Activated CD8-positive, alpha-beta T cell treated with anti-CD3 and anti-CD28 coated beads for 36 hours (primary cell): ENCODE measurements at regions of chr17 and their contacts with region 1.

Region 1: DNA sequence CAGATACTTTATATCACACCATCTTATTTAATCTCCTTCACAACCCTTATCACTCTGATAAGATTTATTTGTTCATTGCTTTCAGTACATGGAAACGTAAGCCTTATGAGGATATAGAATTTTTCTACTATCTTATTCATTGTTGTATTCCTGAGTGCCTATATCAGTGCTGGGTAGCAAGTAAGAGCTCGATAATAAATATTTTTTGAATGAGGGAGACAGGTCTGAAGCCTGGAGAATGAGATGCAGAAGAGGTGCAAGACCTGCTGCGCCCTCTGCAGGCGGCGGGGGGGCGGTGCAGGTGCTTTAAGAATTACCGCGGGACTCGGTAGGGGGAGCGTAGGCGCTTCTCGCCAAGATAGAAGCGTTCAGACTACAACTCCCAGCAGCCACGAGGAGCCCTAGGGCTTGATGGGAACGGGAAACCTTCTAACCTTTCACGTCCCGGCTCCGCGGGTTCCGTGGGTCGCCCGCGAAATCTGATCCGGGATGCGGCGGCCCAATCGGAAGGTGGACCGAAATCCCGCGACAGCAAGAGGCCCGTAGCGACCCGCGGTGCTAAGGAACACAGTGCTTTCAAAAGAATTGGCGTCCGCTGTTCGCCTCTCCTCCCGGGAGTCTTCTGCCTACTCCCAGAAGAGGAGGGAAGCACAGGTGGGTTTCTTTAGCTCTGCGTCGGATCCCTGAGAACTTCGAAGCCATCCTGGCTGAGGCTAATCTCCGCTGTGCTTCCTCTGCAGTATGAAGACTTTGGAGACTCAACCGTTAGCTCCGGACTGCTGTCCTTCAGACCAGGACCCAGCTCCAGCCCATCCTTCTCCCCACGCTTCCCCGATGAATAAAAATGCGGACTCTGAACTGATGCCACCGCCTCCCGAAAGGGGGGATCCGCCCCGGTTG is at the start of gene WRAP53:
- DNase-seq: peak; percentile 98
- ATAC-seq: peak; percentile 81
- H3K4me3 Mint-ChIP-seq: peak within 1 kb of the TSS; percentile 92
- H3K27ac Mint-ChIP-seq: peak within 1 kb of the TSS; percentile 99
- H3K4me1 Mint-ChIP-seq: peaks cover 29% of the 10 kb centered on the region
- H3K27me3 Mint-ChIP-seq: no peaks in the 10 kb centered on the region
- CTCF ChIP-seq: peak; percentile 100
- total RNA-seq, gene WRAP53: 27.5 to 28.6 TPM

Region 2: GRCh38 chr17:7561028-7561575 is 127.1 kb before region 1 on chr17:
- CTCF ChIA-PET with region 1: interaction called, 20 read pairs
- POLR2A ChIA-PET with region 1: interaction called, 25 read pairs
- intact Hi-C with region 1: no loop called
- DNase-seq: peak; percentile 93
- ATAC-seq: peak; percentile 76
- H3K4me3 Mint-ChIP-seq: peak overlapping the region; percentile 85
- H3K27ac Mint-ChIP-seq: peak overlapping the region; percentile 91
- H3K4me1 Mint-ChIP-seq: peaks cover 52% of the 10 kb centered on the region
- H3K27me3 Mint-ChIP-seq: no peaks in the 10 kb centered on the region
- CTCF ChIP-seq: peak; percentile 79

Region 3: GRCh38 chr17:7614422-7615264 is 73.5 kb before region 1 on chr17 and contains the start of gene FXR2:
- CTCF ChIA-PET with region 1: interaction called, 13 read pairs
- POLR2A ChIA-PET with region 1: interaction called, 23 read pairs
- intact Hi-C with region 1: no loop called
- DNase-seq: peak; percentile 100
- ATAC-seq: peak; percentile 96
- H3K4me3 Mint-ChIP-seq: peak within 1 kb of the TSS; percentile 90
- H3K27ac Mint-ChIP-seq: peak within 1 kb of the TSS; percentile 89
- H3K4me1 Mint-ChIP-seq: peaks cover 31% of the 10 kb centered on the region
- H3K27me3 Mint-ChIP-seq: no peaks in the 10 kb centered on the region
- CTCF ChIP-seq: peak; percentile 53
- total RNA-seq, gene FXR2: 28.6 to 33.1 TPM

Region 4: GRCh38 chr17:7650509-7651096 is 37.6 kb before region 1 on chr17 and contains the start of gene ATP1B2:
- CTCF ChIA-PET with region 1: interaction called, 17 read pairs
- POLR2A ChIA-PET with region 1: interaction called, 29 read pairs
- intact Hi-C with region 1: no loop called
- DNase-seq: peak; percentile 83
- ATAC-seq: peak; percentile 92
- H3K4me3 Mint-ChIP-seq: peak within 1 kb of the TSS; percentile 74
- H3K27ac Mint-ChIP-seq: no peak within 1 kb of the TSS
- H3K4me1 Mint-ChIP-seq: peaks cover 14% of the 10 kb centered on the region
- H3K27me3 Mint-ChIP-seq: peaks cover 32% of the 10 kb centered on the region
- CTCF ChIP-seq: no peak
- total RNA-seq, gene ATP1B2: 0.38 TPM in 1 of 2 experiments, not detected in the other

Region 5: DNA sequence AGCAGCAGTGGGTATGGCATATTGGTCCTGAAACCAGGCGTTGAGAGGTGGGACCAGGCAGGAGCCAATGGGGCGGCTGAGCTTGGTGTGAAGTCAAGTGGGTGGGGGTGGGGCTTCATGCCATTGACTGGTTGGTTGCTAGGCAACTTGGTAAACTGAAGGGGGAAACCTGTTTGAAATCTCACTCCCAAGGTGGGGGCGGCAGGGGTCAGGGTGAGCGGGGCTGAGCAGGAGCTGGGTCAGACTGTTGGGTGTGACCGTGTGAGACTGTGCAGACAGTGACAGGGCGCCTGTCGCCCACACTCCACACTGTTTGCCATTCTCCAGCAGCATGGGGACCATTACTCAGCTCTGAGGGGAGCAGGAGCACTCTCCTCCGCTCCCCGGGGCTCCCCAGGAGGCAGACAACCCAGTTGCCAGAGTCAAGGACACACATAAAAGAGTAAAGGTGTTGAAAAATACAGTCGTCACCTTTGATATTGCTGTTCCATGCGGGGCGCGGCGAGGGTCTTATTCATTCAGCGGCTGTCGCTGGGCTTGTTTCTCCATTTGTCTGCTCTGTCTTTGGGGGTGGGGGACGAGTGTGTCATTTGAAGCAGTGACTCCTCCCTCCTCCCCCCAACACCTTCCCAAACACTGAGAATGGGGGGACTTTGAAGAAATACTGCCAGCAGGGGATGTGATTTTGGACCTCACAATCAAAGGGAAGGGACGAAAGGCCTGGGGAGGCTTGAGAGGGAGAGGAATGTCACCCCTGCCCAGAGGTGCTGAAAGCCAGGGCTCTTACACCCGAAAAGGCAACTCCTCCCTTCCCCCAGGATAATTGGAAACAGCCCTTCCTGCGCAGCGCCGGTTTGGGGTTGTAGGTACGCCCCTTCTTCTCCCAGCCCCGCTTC is 15.7 kb after region 1 on chr17:
- CTCF ChIA-PET with region 1: interaction called, 8 read pairs
- POLR2A ChIA-PET with region 1: interaction called, 54 read pairs
- intact Hi-C with region 1: no loop called
- DNase-seq: peak; percentile 57
- ATAC-seq: peak; percentile 60
- H3K4me3 Mint-ChIP-seq: no peak overlapping the region
- H3K27ac Mint-ChIP-seq: no peak overlapping the region
- H3K4me1 Mint-ChIP-seq: peaks cover 14% of the 10 kb centered on the region
- H3K27me3 Mint-ChIP-seq: peaks cover 44% of the 10 kb centered on the region
- CTCF ChIP-seq: no peak

Region 6: GRCh38 chr17:7844292-7845154 is 156.4 kb after region 1 on chr17:
- CTCF ChIA-PET with region 1: interaction called, 5 read pairs
- POLR2A ChIA-PET with region 1: interaction called, 21 read pairs
- intact Hi-C with region 1: no loop called
- DNase-seq: peak; percentile 91
- ATAC-seq: peak; percentile 45
- H3K4me3 Mint-ChIP-seq: peak overlapping the region; percentile 83
- H3K27ac Mint-ChIP-seq: peak overlapping the region; percentile 98
- H3K4me1 Mint-ChIP-seq: peaks cover 45% of the 10 kb centered on the region
- H3K27me3 Mint-ChIP-seq: no peaks in the 10 kb centered on the region
- CTCF ChIP-seq: no peak